CD4-positive, alpha-beta memory T cell (primary cell): ENCODE measurements at regions of chr2 and their contacts with region 1.

Region 1: GRCh38 chr2:96407041-96407918 is 71.7 kb downstream of the NCAPH start:
- DNase-seq: peak; percentile 86 to 89 (median 88)
- H3K4me3 ChIP-seq: peak overlapping the region; percentile 14 to 21
- H3K4me3 Mint-ChIP-seq: peak overlapping the region; percentile 64 to 91 (median 86)
- H3K27ac ChIP-seq: peak overlapping the region; percentile 39
- H3K27ac Mint-ChIP-seq: peak overlapping the region; percentile 81 to 99 (median 97)
- H3K4me1 ChIP-seq: peaks cover 34% of the 10 kb centered on the region
- H3K4me1 Mint-ChIP-seq: peaks cover 22 to 39% (median 32%) of the 10 kb centered on the region in 4 donors
- H3K27me3 ChIP-seq: no peaks in the 10 kb centered on the region
- H3K27me3 Mint-ChIP-seq: no peaks in the 10 kb centered on the region

Region 2: GRCh38 chr2:96091533-96092334 is 315.5 kb before region 1 on chr2:
- CTCF ChIA-PET with region 1: no interaction called
- POLR2A ChIA-PET with region 1: no interaction called
- intact Hi-C with region 1: no loop called
- DNase-seq: peak in 1 of 5 donors; percentile 24
- H3K4me3 ChIP-seq: no peak overlapping the region
- H3K4me3 Mint-ChIP-seq: no peak overlapping the region
- H3K27ac ChIP-seq: no peak overlapping the region
- H3K27ac Mint-ChIP-seq: no peak overlapping the region
- H3K4me1 ChIP-seq: no peaks in the 10 kb centered on the region
- H3K4me1 Mint-ChIP-seq: no peaks in the 10 kb centered on the region
- H3K27me3 ChIP-seq: no peaks in the 10 kb centered on the region
- H3K27me3 Mint-ChIP-seq: peaks cover 3 to 6% of the 10 kb centered on the region in 2 donors

Region 3: GRCh38 chr2:96320728-96321622 is 86.3 kb before region 1 on chr2:
- CTCF ChIA-PET with region 1: interaction called, 8 read pairs
- POLR2A ChIA-PET with region 1: interaction called, 10 read pairs
- intact Hi-C with region 1: no loop called
- DNase-seq: peak in 2 of 5 donors; percentile 5 to 6
- H3K4me3 ChIP-seq: peak overlapping the region; percentile 76 to 77
- H3K4me3 Mint-ChIP-seq: peak overlapping the region; percentile 88 to 95 (median 92)
- H3K27ac ChIP-seq: peak overlapping the region; percentile 72
- H3K27ac Mint-ChIP-seq: peak overlapping the region; percentile 50 to 97 (median 89)
- H3K4me1 ChIP-seq: peaks cover 64% of the 10 kb centered on the region
- H3K4me1 Mint-ChIP-seq: peaks cover 37 to 75% (median 59%) of the 10 kb centered on the region in 4 donors
- H3K27me3 ChIP-seq: no peaks in the 10 kb centered on the region
- H3K27me3 Mint-ChIP-seq: no peaks in the 10 kb centered on the region

Region 4: GRCh38 chr2:96393989-96394761 is 13.1 kb before region 1 on chr2:
- CTCF ChIA-PET with region 1: interaction called, 19 read pairs
- POLR2A ChIA-PET with region 1: interaction called, 6 read pairs
- intact Hi-C with region 1: no loop called
- DNase-seq: no peak
- H3K4me3 ChIP-seq: no peak overlapping the region
- H3K4me3 Mint-ChIP-seq: no peak overlapping the region
- H3K27ac ChIP-seq: no peak overlapping the region
- H3K27ac Mint-ChIP-seq: no peak overlapping the region
- H3K4me1 ChIP-seq: peaks cover 10% of the 10 kb centered on the region
- H3K4me1 Mint-ChIP-seq: peaks cover 7 to 10% (median 8%) of the 10 kb centered on the region in 4 donors
- H3K27me3 ChIP-seq: no peaks in the 10 kb centered on the region
- H3K27me3 Mint-ChIP-seq: peaks cover 0 to 9% of the 10 kb centered on the region in 2 donors

Region 5: GRCh38 chr2:96594691-96595152 is 187.4 kb after region 1 on chr2:
- CTCF ChIA-PET with region 1: no interaction called
- POLR2A ChIA-PET with region 1: interaction called, 10 read pairs
- intact Hi-C with region 1: no loop called
- DNase-seq: peak in 4 of 5 donors; percentile 42 to 55 (median 50)
- H3K4me3 ChIP-seq: no peak overlapping the region
- H3K4me3 Mint-ChIP-seq: peak overlapping the region in 7 of 8 donors; percentile 35 to 79 (median 62)
- H3K27ac ChIP-seq: peak overlapping the region; percentile 10
- H3K27ac Mint-ChIP-seq: peak overlapping the region; percentile 78 to 93 (median 88)
- H3K4me1 ChIP-seq: peaks cover 40% of the 10 kb centered on the region
- H3K4me1 Mint-ChIP-seq: peaks cover 35 to 46% (median 39%) of the 10 kb centered on the region in 4 donors
- H3K27me3 ChIP-seq: no peaks in the 10 kb centered on the region
- H3K27me3 Mint-ChIP-seq: no peaks in the 10 kb centered on the region

Region 6: GRCh38 chr2:96773922-96774321 is 366.6 kb after region 1 on chr2:
- CTCF ChIA-PET with region 1: no interaction called
- POLR2A ChIA-PET with region 1: no interaction called
- intact Hi-C with region 1: no loop called
- DNase-seq: peak; percentile 54 to 82 (median 64)
- H3K4me3 ChIP-seq: peak overlapping the region; percentile 63 to 77
- H3K4me3 Mint-ChIP-seq: peak overlapping the region; percentile 91 to 96 (median 92)
- H3K27ac ChIP-seq: peak overlapping the region; percentile 59
- H3K27ac Mint-ChIP-seq: peak overlapping the region; percentile 85 to 97 (median 93)
- H3K4me1 ChIP-seq: peaks cover 18% of the 10 kb centered on the region
- H3K4me1 Mint-ChIP-seq: peaks cover 17 to 35% (median 21%) of the 10 kb centered on the region in 4 donors
- H3K27me3 ChIP-seq: no peaks in the 10 kb centered on the region
- H3K27me3 Mint-ChIP-seq: no peaks in the 10 kb centered on the region